ENCODE measurements at regions of chr17 and their contacts with region 1.

Region 1: GRCh38 chr17:31061678-31062077 is 33.1 kb upstream of the NF1 start:
- DNase-seq: no peak
- ATAC-seq: no peak
- H3K4me3 Mint-ChIP-seq: no peak overlapping the region
- H3K27ac Mint-ChIP-seq: no peak overlapping the region
- H3K4me1 Mint-ChIP-seq: peaks cover 5% of the 10 kb centered on the region
- H3K27me3 Mint-ChIP-seq: no peaks in the 10 kb centered on the region
- CTCF ChIP-seq: no peak

Region 2: DNA sequence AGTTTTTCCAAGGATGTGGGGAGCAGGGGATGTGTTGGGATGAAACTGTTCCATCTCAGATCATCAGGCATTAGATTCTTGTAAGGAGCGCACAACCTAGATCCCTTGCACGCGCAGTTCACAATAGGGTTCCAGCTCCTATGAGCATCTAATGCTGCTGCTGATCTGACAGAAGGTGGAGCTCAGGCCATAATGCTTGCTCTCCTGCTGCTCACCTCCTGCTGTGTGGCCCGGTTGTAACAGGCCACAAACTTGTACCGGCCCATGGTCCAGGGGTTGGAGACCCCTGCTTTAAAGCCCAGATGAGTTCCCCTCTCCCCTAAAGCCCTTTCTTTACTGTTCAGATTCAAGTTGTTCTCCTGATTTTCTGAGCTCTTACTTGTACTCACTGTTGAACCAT is 46.0 kb before region 1 on chr17:
- CTCF ChIA-PET with region 1: no interaction called
- POLR2A ChIA-PET with region 1: no interaction called
- intact Hi-C with region 1: loop called (anchors 2 kb)
- DNase-seq: no peak
- ATAC-seq: no peak
- H3K4me3 Mint-ChIP-seq: no peak overlapping the region
- H3K27ac Mint-ChIP-seq: no peak overlapping the region
- H3K4me1 Mint-ChIP-seq: no peaks in the 10 kb centered on the region
- H3K27me3 Mint-ChIP-seq: no peaks in the 10 kb centered on the region
- CTCF ChIP-seq: no peak